ENCODE measurements at regions of chr5 and their contacts with region 1.

Region 1: GRCh38 chr5:137695651-137696428 is 40.0 kb downstream of the KLHL3 start:
- DNase-seq: peak; percentile 98
- H3K4me3 ChIP-seq: no peak overlapping the region
- H3K27ac ChIP-seq: peak overlapping the region; percentile 85
- H3K4me1 ChIP-seq: peaks cover 45% of the 10 kb centered on the region
- H3K27me3 ChIP-seq: no peaks in the 10 kb centered on the region
- CTCF ChIP-seq: peak; percentile 61 to 70
- POLR2A ChIP-seq: no peak

Region 2: GRCh38 chr5:137684761-137685160 is 11.1 kb before region 1 on chr5:
- CTCF ChIA-PET with region 1: interaction called, 28 read pairs
- POLR2A ChIA-PET with region 1: no interaction called
- dilution Hi-C with region 1: no loop called
- intact Hi-C with region 1: loop called (anchors 1 kb)
- DNase-seq: peak; percentile 32
- H3K4me3 ChIP-seq: no peak overlapping the region
- H3K27ac ChIP-seq: no peak overlapping the region
- H3K4me1 ChIP-seq: peaks cover 13% of the 10 kb centered on the region
- H3K27me3 ChIP-seq: no peaks in the 10 kb centered on the region
- CTCF ChIP-seq: no peak
- POLR2A ChIP-seq: no peak

Region 3: GRCh38 chr5:137706841-137707240 is 11.0 kb after region 1 on chr5:
- CTCF ChIA-PET with region 1: interaction called, 9 read pairs
- POLR2A ChIA-PET with region 1: no interaction called
- dilution Hi-C with region 1: no loop called
- intact Hi-C with region 1: loop called (anchors 1 kb)
- DNase-seq: peak; percentile 77
- H3K4me3 ChIP-seq: no peak overlapping the region
- H3K27ac ChIP-seq: peak overlapping the region; percentile 69
- H3K4me1 ChIP-seq: peaks cover 17% of the 10 kb centered on the region
- H3K27me3 ChIP-seq: no peaks in the 10 kb centered on the region
- CTCF ChIP-seq: no peak
- POLR2A ChIP-seq: peak; percentile 32

Region 4: DNA sequence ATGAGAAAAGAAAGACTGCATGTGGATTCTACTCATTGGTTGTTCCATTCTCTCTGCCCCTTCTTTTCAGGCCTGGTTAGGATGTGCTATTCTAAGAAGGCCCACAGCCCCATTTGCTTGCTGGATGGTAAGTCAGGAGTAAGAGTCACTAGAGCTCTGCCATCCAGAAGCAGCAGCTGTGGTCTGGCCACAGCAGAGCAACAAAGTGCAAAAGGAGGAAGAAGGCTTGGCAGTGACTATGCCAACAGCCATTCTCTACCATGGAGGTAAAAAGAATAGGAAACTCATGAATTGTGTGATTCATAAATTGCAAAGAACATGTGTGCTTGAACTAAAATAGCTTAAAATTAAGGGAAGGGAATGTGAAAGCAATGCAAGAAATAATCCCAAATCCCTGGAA is 19.1 kb after region 1 on chr5:
- CTCF ChIA-PET with region 1: interaction called, 13 read pairs
- POLR2A ChIA-PET with region 1: no interaction called
- dilution Hi-C with region 1: no loop called
- intact Hi-C with region 1: no loop called
- DNase-seq: peak; percentile 60
- H3K4me3 ChIP-seq: no peak overlapping the region
- H3K27ac ChIP-seq: no peak overlapping the region
- H3K4me1 ChIP-seq: no peaks in the 10 kb centered on the region
- H3K27me3 ChIP-seq: no peaks in the 10 kb centered on the region
- CTCF ChIP-seq: no peak
- POLR2A ChIP-seq: no peak

Region 5: DNA sequence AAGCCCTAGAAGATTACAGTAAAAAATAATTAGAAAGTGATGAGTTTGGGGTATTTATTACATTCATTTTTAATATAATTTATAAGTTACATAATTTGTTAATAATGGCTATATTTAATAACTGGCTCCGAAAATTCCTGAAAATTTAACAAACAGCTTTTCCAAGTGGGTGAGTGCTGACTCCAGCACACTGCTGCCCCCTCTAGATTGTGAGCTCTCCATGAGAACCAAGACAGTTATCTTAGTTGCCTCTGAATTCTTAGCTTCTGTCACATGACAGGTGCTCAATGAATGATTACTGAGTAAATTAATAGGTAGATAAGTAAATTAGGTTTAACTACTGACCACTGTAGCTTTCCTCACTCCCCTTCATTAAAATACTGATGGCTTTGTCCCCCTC is 32.2 kb after region 1 on chr5:
- CTCF ChIA-PET with region 1: interaction called, 41 read pairs
- POLR2A ChIA-PET with region 1: no interaction called
- dilution Hi-C with region 1: no loop called
- intact Hi-C with region 1: no loop called
- DNase-seq: peak; percentile 43
- H3K4me3 ChIP-seq: no peak overlapping the region
- H3K27ac ChIP-seq: no peak overlapping the region
- H3K4me1 ChIP-seq: no peaks in the 10 kb centered on the region
- H3K27me3 ChIP-seq: no peaks in the 10 kb centered on the region
- CTCF ChIP-seq: peak in 1 of 2 donors; percentile 21
- POLR2A ChIP-seq: no peak

Region 6: GRCh38 chr5:137735555-137736284 is 39.9 kb after region 1 on chr5 and contains the start of gene KLHL3:
- CTCF ChIA-PET with region 1: interaction called, 25 read pairs
- POLR2A ChIA-PET with region 1: interaction called, 3 read pairs
- dilution Hi-C with region 1: no loop called
- intact Hi-C with region 1: loop called (anchors 1 kb)
- DNase-seq: peak; percentile 81
- H3K4me3 ChIP-seq: peak within 1 kb of the TSS; percentile 56 to 74 (median 64)
- H3K27ac ChIP-seq: peak within 1 kb of the TSS; percentile 76
- H3K4me1 ChIP-seq: peaks cover 40% of the 10 kb centered on the region
- H3K27me3 ChIP-seq: no peaks in the 10 kb centered on the region
- CTCF ChIP-seq: peak; percentile 16 to 26
- POLR2A ChIP-seq: peak; percentile 71
- total RNA-seq, gene KLHL3: 13.6 and 13.9 TPM in 2 replicates

Region 7: GRCh38 chr5:137743031-137743640 is 47.3 kb after region 1 on chr5:
- CTCF ChIA-PET with region 1: interaction called, 47 read pairs
- POLR2A ChIA-PET with region 1: no interaction called
- dilution Hi-C with region 1: no loop called
- intact Hi-C with region 1: no loop called
- DNase-seq: peak; percentile 72
- H3K4me3 ChIP-seq: no peak overlapping the region
- H3K27ac ChIP-seq: no peak overlapping the region
- H3K4me1 ChIP-seq: no peaks in the 10 kb centered on the region
- H3K27me3 ChIP-seq: no peaks in the 10 kb centered on the region
- CTCF ChIP-seq: peak; percentile 65 to 67
- POLR2A ChIP-seq: no peak

Measured in endothelial cell of umbilical vein (primary cell).